Activated B cell treated with CpG ODN at 0.5 μM for 24 hours (primary cell): ENCODE measurements at regions of chr3 and their contacts with region 1.

Region 1: DNA sequence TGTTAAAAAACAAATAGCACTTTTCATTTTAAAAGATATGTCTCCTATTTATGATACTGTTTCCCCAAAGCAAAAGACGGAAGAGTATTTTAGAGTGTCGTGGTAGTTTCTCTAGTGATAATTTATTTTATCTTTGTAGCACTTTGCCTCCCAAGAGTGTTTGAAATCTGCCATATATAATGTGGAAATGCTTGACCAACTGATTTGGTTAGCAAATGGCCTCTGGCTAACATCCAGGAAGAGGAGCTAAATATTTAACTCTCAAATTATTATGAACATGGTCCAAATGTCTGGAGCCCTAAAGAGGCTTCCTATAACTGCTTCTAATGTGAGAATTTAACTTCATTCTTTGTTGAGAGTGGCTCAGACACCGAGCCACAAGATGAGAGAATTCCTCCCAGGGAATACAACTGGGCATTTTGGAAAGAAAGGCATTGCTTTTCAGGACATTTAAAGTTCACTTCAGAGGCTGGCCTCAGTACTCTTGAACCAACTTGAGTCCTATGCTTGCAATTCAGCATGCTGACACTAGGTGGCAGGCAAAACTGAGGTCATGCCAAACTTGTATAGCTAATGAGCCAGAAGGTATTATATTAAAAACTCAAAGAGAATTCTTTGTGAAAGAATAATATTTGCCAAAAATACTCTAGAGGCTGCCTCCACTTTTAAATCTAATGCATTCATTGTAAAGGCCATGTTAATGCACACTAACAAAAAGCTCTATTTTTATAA is 104.5 kb downstream of the RARB start:
- DNase-seq: no peak
- ATAC-seq: no peak
- H3K4me3 Mint-ChIP-seq: no peak overlapping the region
- H3K27ac Mint-ChIP-seq: no peak overlapping the region
- H3K4me1 Mint-ChIP-seq: no peaks in the 10 kb centered on the region
- H3K27me3 Mint-ChIP-seq: no peaks in the 10 kb centered on the region
- CTCF ChIP-seq: no peak

Region 2: GRCh38 chr3:25362118-25362517 is 170.5 kb before region 1 on chr3:
- CTCF ChIA-PET with region 1: no interaction called
- POLR2A ChIA-PET with region 1: no interaction called
- intact Hi-C with region 1: no loop called
- DNase-seq: no peak
- ATAC-seq: no peak
- H3K4me3 Mint-ChIP-seq: no peak overlapping the region
- H3K27ac Mint-ChIP-seq: no peak overlapping the region
- H3K4me1 Mint-ChIP-seq: no peaks in the 10 kb centered on the region
- H3K27me3 Mint-ChIP-seq: no peaks in the 10 kb centered on the region
- CTCF ChIP-seq: no peak

Region 3: GRCh38 chr3:25476639-25477038 is 56.0 kb before region 1 on chr3:
- CTCF ChIA-PET with region 1: no interaction called
- POLR2A ChIA-PET with region 1: no interaction called
- intact Hi-C with region 1: no loop called
- DNase-seq: no peak
- ATAC-seq: no peak
- H3K4me3 Mint-ChIP-seq: no peak overlapping the region
- H3K27ac Mint-ChIP-seq: no peak overlapping the region
- H3K4me1 Mint-ChIP-seq: no peaks in the 10 kb centered on the region
- H3K27me3 Mint-ChIP-seq: peaks cover 2% of the 10 kb centered on the region
- CTCF ChIP-seq: no peak

Region 4: GRCh38 chr3:25508901-25509300 is 23.7 kb before region 1 on chr3:
- CTCF ChIA-PET with region 1: no interaction called
- POLR2A ChIA-PET with region 1: no interaction called
- intact Hi-C with region 1: no loop called
- DNase-seq: no peak
- ATAC-seq: no peak
- H3K4me3 Mint-ChIP-seq: no peak overlapping the region
- H3K27ac Mint-ChIP-seq: no peak overlapping the region
- H3K4me1 Mint-ChIP-seq: no peaks in the 10 kb centered on the region
- H3K27me3 Mint-ChIP-seq: no peaks in the 10 kb centered on the region
- CTCF ChIP-seq: no peak

Region 5: GRCh38 chr3:26460985-26461384 is 928.4 kb after region 1 on chr3:
- CTCF ChIA-PET with region 1: no interaction called
- POLR2A ChIA-PET with region 1: no interaction called
- intact Hi-C with region 1: no loop called
- DNase-seq: no peak
- ATAC-seq: no peak
- H3K4me3 Mint-ChIP-seq: no peak overlapping the region
- H3K27ac Mint-ChIP-seq: no peak overlapping the region
- H3K4me1 Mint-ChIP-seq: no peaks in the 10 kb centered on the region
- H3K27me3 Mint-ChIP-seq: no peaks in the 10 kb centered on the region
- CTCF ChIP-seq: no peak

Region 6: GRCh38 chr3:26712211-26713026 is 1179.8 kb after region 1 on chr3:
- CTCF ChIA-PET with region 1: no interaction called
- POLR2A ChIA-PET with region 1: no interaction called
- intact Hi-C with region 1: loop called (anchors 2 kb)
- DNase-seq: no peak
- ATAC-seq: no peak
- H3K4me3 Mint-ChIP-seq: no peak overlapping the region
- H3K27ac Mint-ChIP-seq: no peak overlapping the region
- H3K4me1 Mint-ChIP-seq: no peaks in the 10 kb centered on the region
- H3K27me3 Mint-ChIP-seq: no peaks in the 10 kb centered on the region
- CTCF ChIP-seq: no peak